Left colon (tissue), 2 donors: ENCODE measurements at regions of chr1 and their contacts with region 1.

Region 1: GRCh38 chr1:117059678-117060440 is at the start of gene TTF2:
- DNase-seq: peak; percentile 94 to 97
- ATAC-seq: peak; percentile 93
- total RNA-seq, gene TTF2: 25.0 to 28.1 TPM

Region 2: DNA sequence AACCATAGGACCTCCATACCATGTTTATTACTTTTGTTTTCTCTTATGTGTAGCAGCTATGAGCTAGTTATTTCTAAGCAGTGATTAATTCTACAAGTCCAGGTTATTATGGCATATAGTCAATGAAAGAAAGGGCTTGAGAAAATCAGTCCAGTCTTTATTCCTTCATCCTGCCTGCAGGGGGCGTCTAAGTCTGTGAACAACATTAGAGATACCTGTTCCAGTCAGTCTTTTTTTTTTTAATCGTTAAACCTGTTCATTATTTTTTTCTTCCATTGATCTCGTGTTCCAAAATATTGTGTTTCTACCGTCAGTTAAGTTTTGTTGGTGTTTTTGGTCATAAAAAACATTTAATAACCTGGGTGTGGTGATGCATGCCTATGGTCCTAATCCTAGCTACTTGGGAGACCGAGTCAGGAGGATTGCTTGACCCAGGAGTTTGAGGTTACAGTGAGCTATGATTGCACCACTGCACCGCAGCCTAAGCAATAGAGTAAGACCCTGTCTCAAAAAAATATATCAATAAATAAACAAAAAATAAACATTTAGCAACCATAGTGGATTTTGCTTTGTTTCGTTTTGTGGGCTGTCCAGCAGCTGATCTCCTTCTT is 335.0 kb before region 1 on chr1:
- intact Hi-C with region 1: loop called in 1 of 2 experiments (anchors 10 kb)
- DNase-seq: peak in 1 of 2 donors; percentile 70
- ATAC-seq: peak; percentile 47

Region 3: DNA sequence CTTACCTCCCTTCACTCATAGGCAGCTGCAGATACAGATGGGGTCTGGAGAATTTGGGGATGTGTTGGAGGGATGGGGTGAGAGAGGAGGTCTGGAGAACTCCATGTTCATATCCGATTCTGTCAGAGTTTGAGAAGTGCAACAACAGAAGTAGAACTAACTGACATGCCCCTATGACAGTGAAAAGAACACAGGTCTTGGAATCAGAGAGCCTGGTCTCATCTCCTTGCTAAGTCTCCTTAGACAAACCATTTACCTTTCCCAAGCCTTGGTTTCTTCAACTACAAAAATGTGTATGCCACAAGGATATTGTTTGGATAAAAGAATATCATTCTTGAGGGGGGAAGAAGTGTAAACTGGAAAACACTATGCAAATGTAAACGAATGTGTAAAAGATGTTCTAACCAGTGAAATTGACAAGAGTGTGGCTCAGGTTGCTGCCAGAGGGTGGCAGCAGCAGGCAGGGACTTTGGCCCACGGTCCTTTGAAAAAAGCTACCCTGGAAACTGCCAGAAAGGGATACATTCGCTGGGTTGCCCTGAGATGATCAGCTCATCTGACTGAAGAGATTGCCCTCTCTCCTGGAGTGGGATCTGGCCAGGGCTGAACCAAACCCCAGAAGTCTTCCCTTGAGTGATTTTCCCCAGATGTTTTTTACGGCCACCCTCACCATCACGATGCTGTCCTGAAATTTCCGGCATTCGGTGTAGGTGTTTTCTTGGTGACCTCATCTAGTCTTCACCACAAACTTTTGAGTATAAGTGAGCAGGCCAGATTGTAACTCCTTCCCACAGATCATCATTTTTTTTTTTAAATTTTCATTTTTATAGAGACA is 322.6 kb before region 1 on chr1:
- intact Hi-C with region 1: loop called in 1 of 2 experiments (anchors 5 kb)
- DNase-seq: peak in 1 of 2 donors; percentile 69
- ATAC-seq: peak; percentile 84

Region 4: DNA sequence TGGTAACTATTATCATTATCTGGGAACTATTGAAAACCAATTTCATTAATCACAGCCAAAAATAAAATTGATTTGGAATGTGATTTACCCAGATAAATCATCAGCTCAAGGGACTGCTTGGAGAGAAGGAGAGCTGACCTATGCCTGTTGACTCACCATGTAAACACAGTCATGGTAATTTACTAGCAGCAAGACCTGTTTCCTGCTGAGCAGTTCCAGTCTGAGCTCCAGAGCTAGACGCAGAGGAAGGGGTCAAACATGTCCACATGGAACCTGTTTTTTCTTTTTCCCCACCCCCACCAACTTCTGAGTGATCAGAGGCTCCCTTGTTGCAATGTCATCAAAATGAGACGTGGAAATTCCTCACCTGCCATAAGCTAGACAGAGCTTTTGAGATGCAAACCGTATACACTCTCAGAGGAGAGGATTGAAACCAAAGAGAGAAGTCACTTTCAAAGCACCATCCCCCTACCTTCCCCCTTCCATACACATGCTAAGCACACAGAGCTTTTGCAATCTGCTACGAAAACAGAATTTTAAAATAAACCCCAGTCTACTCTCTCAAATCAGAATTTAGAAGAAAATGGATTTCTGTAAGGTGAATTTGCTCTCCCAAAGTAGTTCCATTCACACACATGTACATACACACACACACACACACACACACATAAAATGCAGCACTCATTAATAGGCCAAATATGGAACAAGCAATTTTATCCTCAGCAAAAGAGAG is 206.0 kb before region 1 on chr1:
- intact Hi-C with region 1: loop called in 1 of 2 experiments (anchors 10 kb)
- DNase-seq: peak; percentile 31 to 72
- ATAC-seq: peak; percentile 99

Region 5: GRCh38 chr1:117017648-117018047 is 42.2 kb before region 1 on chr1:
- intact Hi-C with region 1: no loop called
- DNase-seq: no peak
- ATAC-seq: no peak